ENCODE measurements at regions of chr11 and their contacts with region 1.

Region 1: DNA sequence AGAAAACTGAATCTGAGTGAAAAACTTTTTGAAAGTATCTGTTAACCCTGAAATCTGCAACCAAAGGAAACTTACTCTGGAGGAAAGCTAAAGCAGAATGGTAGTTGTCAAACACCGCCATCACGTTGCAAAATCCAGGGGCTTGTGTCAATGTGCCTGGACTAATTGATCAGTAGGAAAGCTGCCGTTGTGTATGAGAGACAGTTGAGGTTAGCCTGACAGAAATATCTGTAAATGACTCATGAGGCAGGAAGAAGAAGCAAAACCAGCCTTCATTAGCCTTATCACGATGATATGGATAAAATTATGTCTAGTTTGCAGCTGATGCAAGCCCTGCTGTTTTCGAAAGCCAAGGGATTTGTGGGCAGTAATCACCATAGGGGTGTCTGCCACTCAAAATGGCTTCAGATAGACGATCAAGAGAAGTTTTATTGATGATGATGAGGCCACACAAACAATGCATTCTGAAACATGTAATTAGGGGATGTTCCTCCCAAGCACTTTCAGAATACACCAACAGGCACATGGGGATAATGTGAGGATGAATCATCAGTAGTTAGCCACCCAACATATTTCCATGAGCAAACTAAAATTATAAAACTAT is 8.9 kb downstream of the SCGB1A1 start:
- DNase-seq: no peak
- ATAC-seq: peak in 2 of 3 donors; percentile 34 to 43
- H3K4me3 ChIP-seq: no peak overlapping the region
- H3K4me3 Mint-ChIP-seq: peak overlapping the region; percentile 40
- H3K27ac ChIP-seq: peak overlapping the region; percentile 48
- H3K27ac Mint-ChIP-seq: peak overlapping the region; percentile 83 to 89
- H3K4me1 ChIP-seq: peaks cover 19% of the 10 kb centered on the region
- H3K4me1 Mint-ChIP-seq: peaks cover 56 to 64% of the 10 kb centered on the region in 2 donors
- H3K27me3 ChIP-seq: no peaks in the 10 kb centered on the region
- H3K27me3 Mint-ChIP-seq: no peaks in the 10 kb centered on the region
- CTCF ChIP-seq: no peak

Region 2: GRCh38 chr11:62542750-62543567 is 115.2 kb after region 1 on chr11:
- intact Hi-C with region 1: loop called (anchors 5 kb)
- DNase-seq: peak; percentile 67 to 85
- ATAC-seq: peak; percentile 59 to 70 (median 59)
- H3K4me3 ChIP-seq: peak overlapping the region; percentile 95
- H3K4me3 Mint-ChIP-seq: peak overlapping the region; percentile 97
- H3K27ac ChIP-seq: peak overlapping the region; percentile 94
- H3K27ac Mint-ChIP-seq: peak overlapping the region; percentile 92 to 94
- H3K4me1 ChIP-seq: peaks cover 81% of the 10 kb centered on the region
- H3K4me1 Mint-ChIP-seq: peaks cover 71 to 82% of the 10 kb centered on the region in 2 donors
- H3K27me3 ChIP-seq: no peaks in the 10 kb centered on the region
- H3K27me3 Mint-ChIP-seq: no peaks in the 10 kb centered on the region
- CTCF ChIP-seq: peak; percentile 96

Region 3: DNA sequence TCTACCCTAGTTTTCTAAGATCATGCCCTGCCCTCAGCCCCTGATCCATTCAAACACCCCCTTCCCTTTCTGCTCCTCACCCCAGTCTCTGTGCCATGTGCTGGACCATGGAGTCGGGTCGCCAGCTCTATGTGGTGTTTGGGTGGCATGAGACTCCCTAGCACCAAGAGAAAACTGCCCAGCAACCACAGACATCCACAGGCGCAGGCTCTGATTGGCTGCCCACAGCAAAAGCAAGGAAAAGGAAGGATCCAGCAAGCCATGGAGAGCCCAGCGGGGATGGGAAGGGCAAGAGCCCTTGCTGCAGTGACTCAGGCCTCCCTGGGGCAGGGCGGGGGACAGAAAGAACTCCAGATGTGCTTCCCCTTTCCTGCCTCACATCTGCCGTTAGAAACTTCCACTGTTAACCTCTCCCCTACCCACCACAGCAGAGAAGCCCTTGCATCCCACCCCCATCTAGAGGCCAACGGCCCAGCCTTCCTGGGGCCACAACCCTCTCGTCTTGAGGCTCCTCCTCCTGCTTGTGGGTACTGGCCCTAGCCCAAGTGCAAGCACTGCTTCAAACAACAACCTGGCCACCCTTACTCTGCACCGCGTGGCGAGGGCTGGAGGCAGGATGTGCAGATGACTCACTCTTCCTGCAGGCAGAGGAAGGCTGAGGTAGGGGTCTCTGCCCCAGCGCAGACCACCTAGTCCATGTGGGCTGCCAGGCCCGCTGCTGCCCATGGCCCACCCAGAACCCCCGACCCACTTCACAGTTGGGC is 128.6 kb after region 1 on chr11:
- intact Hi-C with region 1: loop called (anchors 1 kb)
- DNase-seq: peak; percentile 81 to 93
- ATAC-seq: peak; percentile 53 to 79 (median 69)
- H3K4me3 ChIP-seq: peak overlapping the region; percentile 12
- H3K4me3 Mint-ChIP-seq: peak overlapping the region; percentile 93
- H3K27ac ChIP-seq: peak overlapping the region; percentile 97
- H3K27ac Mint-ChIP-seq: peak overlapping the region; percentile 97 to 98
- H3K4me1 ChIP-seq: peaks cover 92% of the 10 kb centered on the region
- H3K4me1 Mint-ChIP-seq: peaks cover 85 to 96% of the 10 kb centered on the region in 2 donors
- H3K27me3 ChIP-seq: no peaks in the 10 kb centered on the region
- H3K27me3 Mint-ChIP-seq: no peaks in the 10 kb centered on the region
- CTCF ChIP-seq: no peak

Region 4: DNA sequence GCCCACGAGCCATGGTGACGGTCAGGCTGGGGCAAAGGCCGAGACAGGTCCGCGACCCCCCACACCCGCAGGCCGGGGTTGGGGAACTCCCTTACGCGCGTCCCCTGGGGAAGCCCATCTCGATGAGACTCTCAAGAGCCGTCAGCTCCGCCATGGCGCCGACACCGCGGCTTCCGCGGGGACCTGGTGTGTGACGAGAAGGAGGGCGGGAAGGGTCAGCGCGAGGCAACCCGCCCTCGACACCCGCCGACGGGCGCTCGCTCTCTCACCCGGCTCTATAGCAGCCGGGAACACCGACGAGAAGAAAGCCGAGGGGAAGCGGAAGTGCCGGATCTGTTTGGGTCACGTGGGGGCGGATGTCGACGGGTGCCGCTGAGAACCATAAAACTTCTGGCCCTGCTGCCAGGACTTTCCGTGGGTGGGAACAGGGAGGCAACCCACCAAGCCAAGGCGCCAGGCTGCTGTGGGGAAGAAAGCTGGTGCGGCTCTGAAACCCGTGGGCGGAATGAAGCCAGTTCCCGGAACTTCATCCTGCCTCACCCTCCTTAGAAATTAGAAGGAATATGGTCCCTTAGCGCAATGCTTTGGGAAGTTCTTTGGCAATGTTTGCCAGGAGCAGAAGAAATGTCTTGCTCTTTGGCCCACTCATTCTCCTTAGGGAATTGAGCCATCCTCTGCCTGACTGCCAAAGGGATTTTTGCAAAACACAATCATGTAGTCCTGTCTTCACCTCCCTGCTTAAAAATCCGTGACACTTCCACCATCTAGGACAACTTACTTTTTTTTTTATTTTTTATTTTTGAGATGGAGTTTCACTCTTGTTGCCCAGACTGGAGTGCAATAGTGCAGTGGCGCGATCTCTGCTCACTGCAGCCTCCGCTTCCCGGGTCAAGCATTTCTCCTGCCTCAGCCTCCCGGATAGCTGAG is 251.3 kb after region 1 on chr11 and contains the start of gene UBXN1:
- intact Hi-C with region 1: loop called (anchors 5 kb)
- DNase-seq: peak; percentile 79 to 92
- ATAC-seq: peak; percentile 85 to 91 (median 89)
- H3K4me3 ChIP-seq: peak within 1 kb of the TSS; percentile 98
- H3K4me3 Mint-ChIP-seq: peak within 1 kb of the TSS; percentile 93
- H3K27ac ChIP-seq: peak within 1 kb of the TSS; percentile 95
- H3K27ac Mint-ChIP-seq: peak within 1 kb of the TSS; percentile 95 to 99
- H3K4me1 ChIP-seq: peaks cover 21% of the 10 kb centered on the region
- H3K4me1 Mint-ChIP-seq: peaks cover 26 to 31% of the 10 kb centered on the region in 2 donors
- H3K27me3 ChIP-seq: no peaks in the 10 kb centered on the region
- H3K27me3 Mint-ChIP-seq: no peaks in the 10 kb centered on the region
- CTCF ChIP-seq: no peak
- total RNA-seq, gene UBXN1: 179 to 238 (median 238) TPM

Region 5: DNA sequence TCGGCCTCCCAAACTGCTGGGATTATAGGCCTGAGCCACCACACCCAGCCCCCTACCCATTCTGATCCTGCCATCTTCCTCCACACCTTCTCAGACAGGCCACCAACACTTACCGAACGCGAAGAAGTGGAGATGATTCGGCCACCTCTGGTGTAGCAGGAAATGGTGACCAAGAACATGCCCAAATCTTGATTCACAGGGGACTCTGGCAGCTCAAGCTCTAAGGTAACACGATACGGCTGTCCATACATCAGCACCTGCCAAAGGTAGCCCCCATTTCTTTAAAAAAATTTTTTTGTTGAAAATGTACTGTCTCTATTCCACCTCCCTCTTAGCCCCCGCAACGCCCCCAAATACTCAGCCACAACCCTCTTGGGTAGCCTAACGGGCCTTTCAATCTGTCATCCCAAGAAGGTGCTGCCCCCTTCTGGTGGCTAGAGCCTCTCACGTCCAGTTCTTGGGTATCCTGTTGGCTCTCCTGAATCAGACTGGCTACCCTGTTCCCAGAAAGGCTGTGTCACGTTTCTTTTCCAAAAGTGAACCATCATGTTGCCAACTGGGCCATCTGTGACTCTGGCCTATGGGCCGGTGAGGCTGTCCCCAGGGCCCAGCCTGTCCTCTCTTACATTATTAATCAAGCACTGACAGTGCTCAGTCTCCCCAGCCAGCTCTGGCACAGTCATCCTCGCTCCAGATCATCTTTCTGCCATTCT is 266.9 kb after region 1 on chr11:
- intact Hi-C with region 1: loop called (anchors 1 kb)
- DNase-seq: peak; percentile 72 to 91
- ATAC-seq: peak; percentile 78 to 98 (median 96)
- H3K4me3 ChIP-seq: no peak overlapping the region
- H3K4me3 Mint-ChIP-seq: no peak overlapping the region
- H3K27ac ChIP-seq: no peak overlapping the region
- H3K27ac Mint-ChIP-seq: peak overlapping the region in 1 of 2 donors; percentile 7
- H3K4me1 ChIP-seq: no peaks in the 10 kb centered on the region
- H3K4me1 Mint-ChIP-seq: peaks cover 8% of the 10 kb centered on the region in 2 donors
- H3K27me3 ChIP-seq: no peaks in the 10 kb centered on the region
- H3K27me3 Mint-ChIP-seq: no peaks in the 10 kb centered on the region
- CTCF ChIP-seq: peak; percentile 84

Measured in natural killer cell (primary cell).